ENCODE measurements at regions of chr2 and their contacts with region 1.

Region 1: GRCh38 chr2:69163109-69163508 is 150.1 kb downstream of the ANTXR1 start:
- DNase-seq: peak; percentile 55
- H3K4me3 ChIP-seq: no peak overlapping the region
- H3K27ac ChIP-seq: peak overlapping the region; percentile 2
- H3K4me1 ChIP-seq: peaks cover 46% of the 10 kb centered on the region
- H3K27me3 ChIP-seq: no peaks in the 10 kb centered on the region
- CTCF ChIP-seq: no peak

Region 2: DNA sequence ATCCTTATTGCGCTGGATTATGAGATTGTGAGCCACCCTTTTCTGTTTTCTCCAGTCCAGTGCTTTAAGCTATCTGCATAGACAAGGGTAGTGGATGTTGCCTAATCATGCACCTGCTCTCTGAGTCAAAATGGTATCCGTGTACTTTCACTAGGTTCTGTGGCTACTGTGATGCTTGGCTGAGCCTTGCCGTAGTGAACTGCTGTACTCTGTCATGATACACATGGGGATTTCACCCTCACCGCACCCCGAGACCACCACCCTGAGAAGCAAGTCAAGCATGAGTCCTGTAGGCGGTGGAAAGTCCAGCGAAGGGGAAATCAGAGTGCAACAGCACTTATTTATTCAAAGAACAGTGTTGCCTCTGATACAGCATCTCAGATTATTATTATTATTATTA is 373.5 kb before region 1 on chr2:
- CTCF ChIA-PET with region 1: no interaction called
- dilution Hi-C with region 1: no loop called
- in situ Hi-C with region 1: no loop called
- intact Hi-C with region 1: no loop called
- DNase-seq: no peak
- H3K4me3 ChIP-seq: no peak overlapping the region
- H3K27ac ChIP-seq: no peak overlapping the region
- H3K4me1 ChIP-seq: peaks cover 24% of the 10 kb centered on the region
- H3K27me3 ChIP-seq: no peaks in the 10 kb centered on the region
- CTCF ChIP-seq: no peak

Region 3: GRCh38 chr2:68943581-68944568 is 219.2 kb before region 1 on chr2:
- CTCF ChIA-PET with region 1: no interaction called
- dilution Hi-C with region 1: no loop called
- in situ Hi-C with region 1: no loop called
- intact Hi-C with region 1: loop called (anchors 5 kb)
- DNase-seq: peak; percentile 61
- H3K4me3 ChIP-seq: no peak overlapping the region
- H3K27ac ChIP-seq: no peak overlapping the region
- H3K4me1 ChIP-seq: no peaks in the 10 kb centered on the region
- H3K27me3 ChIP-seq: no peaks in the 10 kb centered on the region
- CTCF ChIP-seq: peak; percentile 63 to 84

Region 4: DNA sequence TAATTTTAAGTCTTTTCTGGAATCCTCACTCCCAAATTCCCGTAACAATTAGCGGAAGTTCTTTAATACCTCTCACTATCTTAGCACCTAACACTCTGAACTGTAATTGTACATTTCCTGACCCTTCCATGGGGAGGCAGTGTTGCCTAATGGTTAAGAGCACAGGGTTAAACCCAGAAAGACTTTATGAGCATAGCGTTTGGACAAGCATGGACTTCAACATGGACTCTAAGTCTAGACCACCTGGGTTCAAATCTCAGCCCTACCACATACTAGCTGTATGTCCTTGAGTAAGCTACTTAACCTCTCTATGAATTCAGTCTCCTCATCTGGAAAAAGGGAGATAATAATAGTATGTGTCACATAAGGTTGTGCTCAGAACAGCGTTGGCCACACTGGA is 137.1 kb before region 1 on chr2:
- CTCF ChIA-PET with region 1: no interaction called
- dilution Hi-C with region 1: no loop called
- in situ Hi-C with region 1: no loop called
- intact Hi-C with region 1: loop called (anchors 2 kb)
- DNase-seq: peak; percentile 54
- H3K4me3 ChIP-seq: no peak overlapping the region
- H3K27ac ChIP-seq: no peak overlapping the region
- H3K4me1 ChIP-seq: peaks cover 16% of the 10 kb centered on the region
- H3K27me3 ChIP-seq: no peaks in the 10 kb centered on the region
- CTCF ChIP-seq: peak; percentile 71 to 77

Region 5: DNA sequence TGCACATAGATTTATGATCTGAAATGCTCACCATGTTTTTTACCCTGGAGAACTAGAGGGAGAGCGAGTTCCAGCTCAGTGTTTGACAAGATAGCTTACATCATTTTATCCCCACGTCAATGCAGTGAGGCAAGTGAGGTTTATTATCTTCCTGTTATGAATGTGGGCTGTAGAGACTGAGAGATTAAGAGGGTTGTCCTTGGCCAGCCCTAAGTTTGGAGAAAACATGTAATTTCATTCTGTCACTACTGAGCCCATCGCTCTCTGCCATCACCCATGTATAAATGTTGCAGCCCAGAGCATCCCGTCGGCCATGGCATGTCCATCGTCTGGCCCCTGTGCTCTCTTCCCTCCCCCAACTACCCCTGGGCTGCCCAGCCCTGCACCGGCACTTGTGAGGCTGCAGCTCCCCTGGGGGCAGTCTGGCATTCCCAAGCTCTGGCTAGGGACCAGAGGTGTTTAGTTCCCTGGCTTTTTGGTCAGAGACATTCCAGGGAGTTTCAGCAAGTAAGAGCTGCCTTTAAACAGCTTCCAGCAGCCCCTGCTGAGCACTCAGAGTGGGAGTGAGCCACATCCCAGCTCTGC is 13.4 kb before region 1 on chr2:
- CTCF ChIA-PET with region 1: no interaction called
- dilution Hi-C with region 1: no loop called
- in situ Hi-C with region 1: no loop called
- intact Hi-C with region 1: no loop called
- DNase-seq: no peak
- H3K4me3 ChIP-seq: no peak overlapping the region
- H3K27ac ChIP-seq: no peak overlapping the region
- H3K4me1 ChIP-seq: no peaks in the 10 kb centered on the region
- H3K27me3 ChIP-seq: no peaks in the 10 kb centered on the region
- CTCF ChIP-seq: no peak

Region 6: DNA sequence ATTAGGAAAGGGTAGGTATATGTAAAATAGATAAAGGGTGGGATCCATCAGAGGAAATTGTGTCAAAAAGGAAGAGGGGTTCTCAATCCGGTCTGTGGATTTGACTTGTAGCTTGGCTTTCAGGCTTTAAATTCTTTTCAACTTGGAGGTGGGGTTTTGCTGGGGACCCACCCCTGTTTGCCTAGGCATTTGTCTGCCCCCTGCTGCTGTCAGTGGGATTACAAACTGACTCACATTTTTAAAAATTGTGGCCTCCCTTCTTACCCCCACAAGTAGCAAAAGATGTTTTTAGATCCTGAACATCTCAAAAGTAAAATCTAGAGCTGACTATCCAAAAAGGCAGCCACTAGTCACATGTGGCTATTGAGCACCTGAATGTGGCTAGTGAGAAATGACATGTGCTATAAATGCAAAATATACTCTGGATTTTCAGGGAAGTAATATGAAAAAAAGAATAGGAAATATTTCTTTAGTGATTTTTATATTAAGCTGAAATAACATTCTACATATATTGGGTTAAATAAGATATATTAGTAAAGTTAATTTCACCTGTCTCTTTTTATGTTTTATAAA is 45.0 kb after region 1 on chr2:
- CTCF ChIA-PET with region 1: no interaction called
- dilution Hi-C with region 1: no loop called
- in situ Hi-C with region 1: no loop called
- intact Hi-C with region 1: loop called (anchors 5 kb)
- DNase-seq: no peak
- H3K4me3 ChIP-seq: no peak overlapping the region
- H3K27ac ChIP-seq: no peak overlapping the region
- H3K4me1 ChIP-seq: no peaks in the 10 kb centered on the region
- H3K27me3 ChIP-seq: no peaks in the 10 kb centered on the region
- CTCF ChIP-seq: peak in 1 of 2 donors; percentile 38

Region 7: DNA sequence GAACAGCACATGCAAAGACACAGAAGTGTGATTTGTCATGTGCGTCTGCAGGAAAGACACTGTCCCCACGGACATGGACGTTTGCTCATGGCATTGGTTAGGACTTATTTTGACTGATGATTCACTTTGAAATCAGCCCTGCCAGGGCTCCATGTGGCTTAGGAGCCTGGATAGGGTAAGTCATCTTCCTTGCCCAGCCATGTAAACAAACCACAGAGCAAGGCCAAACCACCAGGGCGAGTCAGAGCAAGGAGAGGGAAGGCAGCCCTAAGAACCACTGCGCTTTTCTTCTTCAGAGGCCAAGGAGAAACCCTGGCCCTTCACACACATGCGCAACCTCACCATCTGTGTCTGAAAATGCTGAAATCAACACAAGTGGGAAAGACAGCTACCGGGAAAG is 135.2 kb after region 1 on chr2:
- CTCF ChIA-PET with region 1: no interaction called
- dilution Hi-C with region 1: no loop called
- in situ Hi-C with region 1: loop called (anchors 5 kb)
- intact Hi-C with region 1: loop called (anchors 2 kb)
- DNase-seq: peak; percentile 96
- H3K4me3 ChIP-seq: no peak overlapping the region
- H3K27ac ChIP-seq: no peak overlapping the region
- H3K4me1 ChIP-seq: peaks cover 14% of the 10 kb centered on the region
- H3K27me3 ChIP-seq: no peaks in the 10 kb centered on the region
- CTCF ChIP-seq: peak in 1 of 2 donors; percentile 8

Region 8: DNA sequence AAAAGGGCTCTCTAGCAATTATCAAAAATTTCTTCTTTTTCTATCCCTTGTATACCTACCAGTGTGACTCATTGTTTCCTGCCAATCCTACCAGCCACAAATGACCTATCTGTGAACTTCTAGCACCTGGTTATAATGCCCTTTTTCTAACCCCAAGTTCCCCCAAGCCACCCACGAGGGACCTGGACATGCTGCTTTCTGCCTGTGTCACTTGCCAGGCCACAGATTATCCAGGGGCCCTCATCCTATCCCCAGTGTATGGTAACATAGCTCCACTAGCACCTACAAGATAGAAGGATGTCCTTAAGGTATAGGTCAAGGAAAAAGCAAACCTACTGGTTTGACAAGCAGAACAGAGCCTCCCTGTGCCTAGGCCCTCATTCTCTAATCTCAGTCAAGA is 453.6 kb after region 1 on chr2:
- CTCF ChIA-PET with region 1: no interaction called
- dilution Hi-C with region 1: no loop called
- in situ Hi-C with region 1: no loop called
- intact Hi-C with region 1: no loop called
- DNase-seq: peak; percentile 58
- H3K4me3 ChIP-seq: no peak overlapping the region
- H3K27ac ChIP-seq: no peak overlapping the region
- H3K4me1 ChIP-seq: peaks cover 26% of the 10 kb centered on the region
- H3K27me3 ChIP-seq: no peaks in the 10 kb centered on the region
- CTCF ChIP-seq: no peak